ENCODE measurements at regions of chr1 and their contacts with region 1.

Region 1: DNA sequence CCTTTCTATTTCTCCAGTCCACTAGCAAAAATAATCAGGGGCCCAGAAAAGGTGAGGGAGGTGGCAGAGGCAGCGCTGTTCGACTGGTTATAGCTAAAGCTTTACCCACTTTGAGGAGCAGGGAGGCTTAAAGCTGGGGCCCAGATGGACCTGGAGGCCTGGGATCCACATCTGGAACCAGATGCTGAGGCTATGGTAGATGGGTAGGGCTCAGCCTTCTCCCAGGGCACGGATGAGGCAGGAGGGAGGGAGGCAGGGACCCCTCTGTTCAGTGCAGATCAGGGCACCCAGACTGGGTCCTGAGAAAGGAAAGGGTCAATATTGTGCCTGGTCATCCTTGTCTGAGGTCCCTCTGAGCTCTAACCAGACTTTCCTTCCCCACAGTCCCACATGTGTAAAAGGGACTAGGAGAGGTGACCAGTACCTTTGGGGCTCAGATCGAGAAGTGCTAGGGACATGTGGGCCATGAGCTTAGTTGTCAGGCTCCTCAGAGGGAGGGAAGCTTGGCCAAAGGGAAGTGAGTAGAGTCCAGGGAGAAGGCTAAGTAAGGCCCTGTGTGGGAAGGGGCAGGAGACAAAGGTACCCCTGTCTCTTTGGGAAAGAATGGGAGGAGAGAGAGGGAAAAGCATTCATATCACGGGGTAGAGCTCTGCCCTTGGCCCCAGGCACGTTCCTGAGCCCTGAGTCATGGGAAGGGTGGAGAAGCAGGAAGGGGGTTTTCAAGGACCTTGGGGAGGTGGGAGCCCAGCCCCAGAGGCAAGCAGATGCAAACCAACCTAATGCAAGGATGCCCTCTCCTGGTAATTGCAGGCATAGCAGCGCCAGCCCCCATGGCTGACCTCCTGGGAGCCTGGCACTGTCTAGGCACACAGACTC is 15.4 kb downstream of the LMNA start:
- DNase-seq: peak; percentile 89
- H3K4me3 Mint-ChIP-seq: no peak overlapping the region
- H3K27ac Mint-ChIP-seq: peak overlapping the region; percentile 50
- H3K4me1 Mint-ChIP-seq: peaks cover 52% of the 10 kb centered on the region
- H3K27me3 Mint-ChIP-seq: no peaks in the 10 kb centered on the region

Region 2: GRCh38 chr1:155208541-155209311 is 921.2 kb before region 1 on chr1 and contains the start of gene MTX1:
- CTCF ChIA-PET with region 1: no interaction called
- POLR2A ChIA-PET with region 1: no interaction called
- intact Hi-C with region 1: no loop called
- DNase-seq: peak; percentile 92
- H3K4me3 Mint-ChIP-seq: peak within 1 kb of the TSS; percentile 83
- H3K27ac Mint-ChIP-seq: peak within 1 kb of the TSS; percentile 89
- H3K4me1 Mint-ChIP-seq: peaks cover 29% of the 10 kb centered on the region
- H3K27me3 Mint-ChIP-seq: no peaks in the 10 kb centered on the region
- total RNA-seq, gene MTX1: 45.2 to 47.9 TPM

Region 3: GRCh38 chr1:156054500-156055280 is 75.3 kb before region 1 on chr1 and contains the start of gene LAMTOR2:
- CTCF ChIA-PET with region 1: no interaction called
- POLR2A ChIA-PET with region 1: no interaction called
- intact Hi-C with region 1: loop called (anchors 2 kb)
- DNase-seq: peak; percentile 98
- H3K4me3 Mint-ChIP-seq: peak within 1 kb of the TSS; percentile 93
- H3K27ac Mint-ChIP-seq: peak within 1 kb of the TSS; percentile 96
- H3K4me1 Mint-ChIP-seq: peaks cover 27% of the 10 kb centered on the region
- H3K27me3 Mint-ChIP-seq: no peaks in the 10 kb centered on the region
- total RNA-seq, gene LAMTOR2: 61.4 to 65.1 TPM

Region 4: GRCh38 chr1:156083800-156084790 is 45.8 kb before region 1 on chr1:
- CTCF ChIA-PET with region 1: interaction called, 1,097 read pairs
- POLR2A ChIA-PET with region 1: no interaction called
- intact Hi-C with region 1: no loop called
- DNase-seq: no peak
- H3K4me3 Mint-ChIP-seq: peak overlapping the region; percentile 6
- H3K27ac Mint-ChIP-seq: no peak overlapping the region
- H3K4me1 Mint-ChIP-seq: peaks cover 6% of the 10 kb centered on the region
- H3K27me3 Mint-ChIP-seq: peaks cover 28% of the 10 kb centered on the region

Region 5: DNA sequence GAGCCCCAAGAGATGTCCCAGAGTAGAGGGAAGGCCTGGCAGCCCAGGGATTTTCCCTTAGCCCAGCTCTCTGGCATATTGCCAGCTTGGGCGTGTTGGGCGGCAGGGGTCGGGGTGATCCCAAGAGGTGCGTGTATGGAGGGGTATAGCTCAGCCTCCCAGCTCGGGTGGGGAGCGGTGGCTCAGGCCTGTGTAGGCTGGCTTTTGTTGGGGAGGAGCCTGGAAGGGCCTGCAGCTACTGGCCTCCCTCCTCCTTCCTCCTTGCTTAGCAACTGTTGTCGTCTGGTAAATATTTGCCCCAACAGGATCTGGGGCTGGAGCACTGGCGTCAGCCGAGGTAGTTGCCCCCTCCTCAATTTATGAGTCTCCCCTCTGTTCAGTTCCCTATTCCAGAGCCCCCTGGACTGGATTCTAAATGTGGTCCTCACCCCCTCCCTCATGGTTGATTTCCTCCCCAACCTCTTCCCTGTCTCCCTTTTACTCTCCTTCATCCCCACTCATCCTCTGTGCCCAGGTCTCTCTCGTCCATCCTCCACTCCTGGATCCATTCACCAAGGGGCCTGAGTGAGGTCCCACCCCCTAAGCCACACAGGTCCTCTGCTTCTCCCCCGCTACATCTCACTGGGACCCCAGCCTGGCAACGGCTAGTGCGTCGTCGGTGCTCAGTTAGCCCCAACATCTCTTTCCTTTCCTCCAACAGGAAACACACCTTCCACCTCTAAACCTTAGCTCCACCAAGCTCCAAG is 25.7 kb before region 1 on chr1:
- CTCF ChIA-PET with region 1: interaction called, 1,097 read pairs
- POLR2A ChIA-PET with region 1: interaction called, 180 read pairs
- intact Hi-C with region 1: loop called (anchors 1 kb)
- DNase-seq: peak; percentile 74
- H3K4me3 Mint-ChIP-seq: peak overlapping the region; percentile 33
- H3K27ac Mint-ChIP-seq: peak overlapping the region; percentile 93
- H3K4me1 Mint-ChIP-seq: peaks cover 66% of the 10 kb centered on the region
- H3K27me3 Mint-ChIP-seq: no peaks in the 10 kb centered on the region

Region 6: GRCh38 chr1:156140879-156141252 is 10.9 kb after region 1 on chr1:
- CTCF ChIA-PET with region 1: interaction called, 23 read pairs
- POLR2A ChIA-PET with region 1: no interaction called
- intact Hi-C with region 1: no loop called
- DNase-seq: no peak
- H3K4me3 Mint-ChIP-seq: no peak overlapping the region
- H3K27ac Mint-ChIP-seq: no peak overlapping the region
- H3K4me1 Mint-ChIP-seq: peaks cover 4% of the 10 kb centered on the region
- H3K27me3 Mint-ChIP-seq: no peaks in the 10 kb centered on the region

Measured in activated CD4-positive, alpha-beta memory T cell treated with anti-CD3 and anti-CD28 coated beads for 36 hours (primary cell).